Astrocyte of the cerebellum (primary cell): ENCODE measurements at regions of chr7 and their contacts with region 1.

Region 1: DNA sequence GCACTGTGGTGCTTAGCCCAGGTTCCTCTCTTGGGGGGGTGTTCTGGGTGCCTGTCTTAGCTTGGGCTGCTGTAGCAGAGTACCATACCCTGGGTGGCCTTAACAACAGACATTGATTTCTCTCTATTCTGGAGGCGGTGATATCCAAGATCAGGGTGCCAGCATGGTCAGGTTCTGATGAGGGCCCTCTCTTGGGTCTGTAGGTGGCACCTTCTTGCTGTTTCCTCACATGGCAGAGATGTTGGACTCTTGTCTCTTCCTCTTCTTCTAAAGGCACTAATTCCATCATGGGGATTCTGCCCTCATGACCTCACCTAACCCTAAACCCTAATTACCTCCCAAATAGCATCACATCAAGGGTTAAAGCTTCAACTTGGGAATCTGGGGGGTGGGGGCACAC is 19.9 kb upstream of the CRHR2 start:
- DNase-seq: no peak
- H3K4me3 ChIP-seq: no peak overlapping the region
- CTCF ChIP-seq: no peak

Region 2: DNA sequence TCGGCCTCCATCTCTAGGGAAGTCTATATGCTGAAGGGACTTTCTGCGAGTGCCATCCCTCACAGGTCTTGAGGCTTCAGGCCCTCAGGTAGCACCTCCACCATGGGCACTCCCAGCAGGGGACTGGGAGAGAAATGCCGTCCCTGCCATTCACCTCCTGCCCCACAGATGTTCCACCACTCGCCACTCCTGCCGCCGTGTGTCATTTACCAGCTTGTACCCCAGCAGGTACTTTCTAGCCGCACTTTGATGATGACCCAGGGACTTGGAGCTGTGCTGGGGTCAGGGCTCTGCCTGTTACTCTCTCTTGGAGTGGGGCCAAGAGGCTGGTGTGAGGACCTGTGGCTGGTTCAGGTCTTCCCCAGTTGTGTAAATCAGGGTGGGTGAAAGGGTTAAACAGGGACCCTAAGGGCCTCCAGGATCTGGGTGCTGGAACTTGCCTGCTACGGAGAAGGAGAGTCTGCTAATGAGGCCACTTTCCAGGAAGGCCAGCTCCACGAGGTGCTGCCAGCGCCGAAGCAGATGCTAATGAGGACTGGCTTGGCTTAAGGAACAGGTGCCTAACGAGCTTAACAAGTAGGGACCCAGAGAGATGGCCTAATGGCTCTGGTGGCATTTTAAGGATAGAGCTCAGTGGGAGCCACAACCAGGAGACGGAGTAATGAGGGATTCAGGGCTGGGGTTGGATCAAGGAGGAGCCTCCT is 52.3 kb before region 1 on chr7:
- in situ Hi-C with region 1: no loop called
- DNase-seq: no peak
- H3K4me3 ChIP-seq: no peak overlapping the region
- CTCF ChIP-seq: no peak

Region 3: DNA sequence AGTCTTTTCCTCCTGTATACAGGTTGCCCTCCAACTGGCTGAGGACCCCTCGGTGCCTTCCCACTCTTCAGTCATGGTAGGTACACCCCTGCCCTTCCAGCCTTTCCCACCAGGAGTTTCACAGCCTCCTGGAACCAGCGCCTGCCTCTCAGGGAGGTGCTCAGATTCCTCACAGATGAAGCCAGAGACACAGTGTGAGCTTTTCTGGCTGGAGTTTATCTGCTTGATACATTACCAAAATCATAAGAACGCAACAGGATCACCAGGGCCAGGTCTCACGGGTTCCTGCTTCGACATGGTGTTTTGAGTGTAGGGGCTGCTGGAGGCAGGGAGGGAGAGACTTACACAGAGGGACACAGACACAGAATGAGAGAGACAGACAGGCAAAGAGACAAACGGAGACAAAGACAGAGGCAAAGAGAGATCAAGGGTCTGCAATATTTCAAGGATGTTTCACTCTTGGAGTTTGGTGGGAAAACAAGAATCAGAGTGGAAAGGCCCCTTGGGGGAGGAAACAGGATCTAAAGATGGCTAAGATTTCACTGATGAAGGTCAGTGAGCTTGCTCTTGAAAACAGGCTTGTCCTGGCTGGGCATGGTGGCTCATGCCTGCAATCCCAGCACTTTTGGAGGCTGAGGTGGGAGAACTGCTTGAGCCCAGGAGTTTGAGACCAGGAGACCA is 43.2 kb after region 1 on chr7:
- in situ Hi-C with region 1: loop called (anchors 5 kb)
- DNase-seq: no peak
- H3K4me3 ChIP-seq: no peak overlapping the region
- CTCF ChIP-seq: no peak